GM12878 (cell line): ENCODE measurements at regions of chr13 and their contacts with region 1.

Region 1: DNA sequence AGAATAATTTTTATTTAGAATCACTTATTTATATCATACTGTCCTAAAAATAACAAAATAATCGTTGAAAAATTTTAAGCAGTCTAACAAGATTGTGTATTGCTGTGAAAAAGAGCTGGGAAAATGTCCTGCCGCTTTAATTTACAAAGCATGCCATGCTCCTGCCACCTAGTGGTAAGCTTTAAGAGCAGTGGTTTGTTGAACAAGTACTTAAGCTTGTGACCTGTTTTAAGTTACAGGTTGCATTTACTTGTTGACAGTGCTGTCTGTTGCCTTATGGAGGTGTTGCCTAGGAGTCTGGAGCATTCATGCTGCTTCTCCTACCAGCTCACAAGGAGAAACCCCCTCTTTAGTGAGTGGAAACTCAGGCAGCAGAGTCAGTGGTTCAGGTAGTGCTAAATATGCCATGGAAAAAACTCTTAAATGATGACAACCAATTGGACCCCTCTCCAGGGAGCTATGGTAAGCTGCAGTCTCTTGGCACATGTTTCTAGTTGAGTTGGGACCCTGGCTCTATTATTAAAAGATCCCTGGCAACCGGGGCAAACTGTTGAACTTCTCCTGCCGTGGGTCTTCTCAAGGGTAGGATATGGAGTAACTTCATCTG is 68.4 kb downstream of the SPATA13 start:
- DNase-seq: no peak
- ATAC-seq: peak; percentile 70
- H3K4me3 ChIP-seq: no peak overlapping the region
- H3K27ac ChIP-seq: no peak overlapping the region
- H3K4me1 ChIP-seq: peaks cover 18% of the 10 kb centered on the region
- H3K27me3 ChIP-seq: no peaks in the 10 kb centered on the region
- CTCF ChIP-seq: peak; percentile 76 to 96 (median 87)
- EP300 ChIP-seq: no peak
- POLR2A ChIP-seq: no peak
- RAD21 ChIP-seq: peak; percentile 82

Region 2: GRCh38 chr13:23915308-23915707 is 313.6 kb before region 1 on chr13:
- CTCF ChIA-PET with region 1: interaction called, 5 read pairs
- POLR2A ChIA-PET with region 1: no interaction called
- RAD21 ChIA-PET with region 1: no interaction called
- SMC1A ChIA-PET with region 1: interaction called, 8 read pairs
- in situ Hi-C with region 1: loop called (anchors 5 kb)
- intact Hi-C with region 1: no loop called
- DNase-seq: no peak
- ATAC-seq: no peak
- H3K4me3 ChIP-seq: no peak overlapping the region
- H3K27ac ChIP-seq: no peak overlapping the region
- H3K4me1 ChIP-seq: no peaks in the 10 kb centered on the region
- H3K27me3 ChIP-seq: no peaks in the 10 kb centered on the region
- CTCF ChIP-seq: no peak
- EP300 ChIP-seq: no peak
- POLR2A ChIP-seq: no peak
- RAD21 ChIP-seq: no peak

Region 3: DNA sequence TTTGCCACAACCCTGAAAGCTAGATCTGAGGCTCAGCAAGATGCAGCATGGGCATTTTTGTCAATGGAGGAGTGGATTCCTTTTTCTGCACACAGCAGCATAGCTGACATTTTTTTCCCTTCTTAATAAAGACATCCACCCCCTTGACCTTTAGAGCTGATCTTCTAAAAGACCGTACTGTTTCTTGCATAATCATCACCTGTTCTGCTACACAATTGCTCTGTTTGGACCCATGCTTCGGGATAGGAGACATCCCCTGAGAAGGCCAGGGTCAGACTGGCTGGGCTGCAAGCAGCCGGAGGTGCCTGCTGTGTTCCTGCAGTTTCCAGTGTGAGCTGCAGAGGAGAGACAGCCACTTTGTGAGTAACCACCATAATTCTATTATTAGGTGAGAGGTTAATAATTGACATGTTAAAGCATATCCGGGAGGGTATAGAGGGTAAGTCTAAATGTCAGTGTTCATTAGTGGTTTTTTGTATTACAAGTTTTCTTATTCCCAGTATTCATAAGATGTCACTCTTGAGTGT is 223.1 kb before region 1 on chr13:
- CTCF ChIA-PET with region 1: interaction called, 10 read pairs
- POLR2A ChIA-PET with region 1: no interaction called
- RAD21 ChIA-PET with region 1: no interaction called
- SMC1A ChIA-PET with region 1: no interaction called
- in situ Hi-C with region 1: no loop called
- intact Hi-C with region 1: no loop called
- DNase-seq: peak; percentile 19
- ATAC-seq: peak; percentile 95
- H3K4me3 ChIP-seq: no peak overlapping the region
- H3K27ac ChIP-seq: no peak overlapping the region
- H3K4me1 ChIP-seq: no peaks in the 10 kb centered on the region
- H3K27me3 ChIP-seq: no peaks in the 10 kb centered on the region
- CTCF ChIP-seq: no peak
- EP300 ChIP-seq: peak; percentile 14 to 57; a peak in 1 of 4 replicates
- POLR2A ChIP-seq: no peak
- RAD21 ChIP-seq: no peak

Region 4: DNA sequence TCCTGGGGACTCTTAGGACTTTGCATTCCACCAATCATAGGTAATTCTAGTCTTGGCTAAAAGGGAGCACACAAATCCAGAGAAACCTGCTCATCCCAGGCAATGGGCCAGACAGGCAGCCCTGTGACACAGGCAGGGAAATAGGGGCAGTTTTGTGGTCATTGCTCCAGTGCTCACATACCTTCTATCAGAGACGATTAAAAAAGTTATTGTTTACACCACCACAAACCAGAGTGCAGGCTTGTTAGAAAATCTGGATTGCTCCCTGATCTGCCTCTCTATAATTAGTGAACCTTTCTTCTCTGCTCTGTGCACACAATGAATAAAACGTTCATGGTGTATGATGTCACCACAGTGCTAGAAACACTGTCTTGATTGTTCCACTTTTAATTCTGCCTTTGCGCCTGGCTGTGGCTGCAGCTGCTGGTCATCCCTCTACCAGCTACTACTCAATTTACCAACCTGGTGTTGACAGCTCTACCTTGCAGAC is 190.1 kb before region 1 on chr13:
- CTCF ChIA-PET with region 1: interaction called, 15 read pairs
- POLR2A ChIA-PET with region 1: no interaction called
- RAD21 ChIA-PET with region 1: interaction called, 3 read pairs
- SMC1A ChIA-PET with region 1: interaction called, 5 read pairs
- in situ Hi-C with region 1: no loop called
- intact Hi-C with region 1: no loop called
- DNase-seq: no peak
- ATAC-seq: peak; percentile 74
- H3K4me3 ChIP-seq: no peak overlapping the region
- H3K27ac ChIP-seq: no peak overlapping the region
- H3K4me1 ChIP-seq: peaks cover 22% of the 10 kb centered on the region
- H3K27me3 ChIP-seq: peaks cover 0 to 3% of the 10 kb centered on the region in 2 experiments; a peak in 2 of 4 replicates
- CTCF ChIP-seq: no peak
- EP300 ChIP-seq: peak in 1 of 2 experiments; percentile 27; a peak in 1 of 4 replicates
- POLR2A ChIP-seq: no peak
- RAD21 ChIP-seq: no peak

Region 5: DNA sequence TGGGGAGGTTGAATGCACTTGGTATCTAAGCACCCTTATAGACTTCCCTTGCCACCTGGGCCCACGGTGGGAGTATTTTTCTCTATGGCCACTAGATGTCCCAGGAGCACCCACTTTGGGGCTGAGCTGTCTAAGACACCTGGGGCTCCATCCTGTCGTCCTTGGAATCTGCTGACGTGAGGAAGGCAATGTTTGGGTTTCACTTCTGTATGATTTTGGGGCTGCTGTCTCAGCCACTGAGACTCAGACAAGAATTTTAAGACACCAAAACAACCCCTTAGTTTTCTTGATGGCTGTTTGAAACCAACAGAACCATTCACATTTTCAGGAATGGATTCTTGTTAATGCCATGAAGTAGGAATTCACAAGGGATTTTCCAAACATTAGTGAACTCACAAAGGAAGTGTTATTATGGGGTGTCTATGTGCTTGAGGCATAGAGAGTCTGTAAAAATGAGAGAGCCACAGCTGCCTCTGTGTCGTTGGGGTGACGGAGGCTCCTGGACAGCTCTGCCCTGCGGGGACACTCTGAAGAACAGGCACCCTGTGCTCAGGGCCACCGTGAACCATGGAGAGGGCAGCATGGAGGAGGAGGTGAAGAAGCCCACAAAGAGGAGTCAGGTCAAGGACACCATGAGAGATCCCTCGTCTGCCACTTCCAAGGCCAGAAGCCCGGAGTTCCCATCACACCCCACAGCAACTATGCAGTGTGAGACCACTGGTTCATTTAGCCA is 175.3 kb before region 1 on chr13:
- CTCF ChIA-PET with region 1: interaction called, 33 read pairs
- POLR2A ChIA-PET with region 1: interaction called, 3 read pairs
- RAD21 ChIA-PET with region 1: interaction called, 4 read pairs
- SMC1A ChIA-PET with region 1: interaction called, 5 read pairs
- in situ Hi-C with region 1: no loop called
- intact Hi-C with region 1: no loop called
- DNase-seq: peak; percentile 17
- ATAC-seq: peak; percentile 98
- H3K4me3 ChIP-seq: no peak overlapping the region
- H3K27ac ChIP-seq: no peak overlapping the region
- H3K4me1 ChIP-seq: no peaks in the 10 kb centered on the region
- H3K27me3 ChIP-seq: no peaks in the 10 kb centered on the region; a peak in 2 of 4 replicates
- CTCF ChIP-seq: peak; percentile 81 to 86 (median 82)
- EP300 ChIP-seq: no peak
- POLR2A ChIP-seq: no peak
- RAD21 ChIP-seq: peak; percentile 92

Region 6: GRCh38 chr13:24270639-24271141 is 41.7 kb after region 1 on chr13:
- CTCF ChIA-PET with region 1: interaction called, 15 read pairs
- POLR2A ChIA-PET with region 1: interaction called, 15 read pairs
- RAD21 ChIA-PET with region 1: interaction called, 80 read pairs
- SMC1A ChIA-PET with region 1: interaction called, 25 read pairs
- in situ Hi-C with region 1: no loop called
- intact Hi-C with region 1: no loop called
- DNase-seq: peak; percentile 38
- ATAC-seq: peak; percentile 71
- H3K4me3 ChIP-seq: peak overlapping the region; percentile 60
- H3K27ac ChIP-seq: peak overlapping the region; percentile 93
- H3K4me1 ChIP-seq: peaks cover 46% of the 10 kb centered on the region
- H3K27me3 ChIP-seq: no peaks in the 10 kb centered on the region
- CTCF ChIP-seq: no peak
- EP300 ChIP-seq: no peak
- POLR2A ChIP-seq: peak; percentile 77
- RAD21 ChIP-seq: peak; percentile 16; the same call in 1 of the 2 replicates

Region 7: DNA sequence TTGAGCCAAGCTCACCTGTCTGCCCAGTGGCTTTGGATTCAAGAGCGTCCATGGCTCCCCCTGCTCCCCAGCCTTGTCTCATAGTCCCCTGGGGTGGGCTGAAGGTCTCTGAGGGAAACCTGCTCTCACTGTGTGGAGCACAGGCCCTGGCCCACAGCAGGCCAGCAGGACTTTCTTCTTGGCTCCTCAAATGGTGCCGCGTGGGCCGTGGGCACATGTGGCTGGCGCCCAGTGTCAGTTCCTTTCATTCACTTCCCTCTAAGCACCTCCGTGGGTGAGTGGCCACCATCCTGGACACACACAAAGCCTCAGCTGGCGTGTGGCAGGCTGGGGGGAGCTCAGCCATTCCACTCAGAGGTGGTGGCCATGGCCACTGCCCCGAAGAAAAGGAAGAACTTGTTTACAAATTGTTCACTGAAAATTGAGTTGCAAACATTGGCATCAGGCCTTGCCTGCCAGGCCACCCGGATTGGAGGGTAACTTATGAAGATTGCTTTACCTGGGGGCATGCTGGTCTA is 133.5 kb after region 1 on chr13:
- CTCF ChIA-PET with region 1: no interaction called
- POLR2A ChIA-PET with region 1: no interaction called
- RAD21 ChIA-PET with region 1: no interaction called
- SMC1A ChIA-PET with region 1: no interaction called
- in situ Hi-C with region 1: no loop called
- intact Hi-C with region 1: no loop called
- DNase-seq: no peak
- ATAC-seq: no peak
- H3K4me3 ChIP-seq: no peak overlapping the region
- H3K27ac ChIP-seq: no peak overlapping the region
- H3K4me1 ChIP-seq: no peaks in the 10 kb centered on the region
- H3K27me3 ChIP-seq: no peaks in the 10 kb centered on the region
- CTCF ChIP-seq: no peak
- EP300 ChIP-seq: no peak
- POLR2A ChIP-seq: no peak
- RAD21 ChIP-seq: no peak

Region 8: DNA sequence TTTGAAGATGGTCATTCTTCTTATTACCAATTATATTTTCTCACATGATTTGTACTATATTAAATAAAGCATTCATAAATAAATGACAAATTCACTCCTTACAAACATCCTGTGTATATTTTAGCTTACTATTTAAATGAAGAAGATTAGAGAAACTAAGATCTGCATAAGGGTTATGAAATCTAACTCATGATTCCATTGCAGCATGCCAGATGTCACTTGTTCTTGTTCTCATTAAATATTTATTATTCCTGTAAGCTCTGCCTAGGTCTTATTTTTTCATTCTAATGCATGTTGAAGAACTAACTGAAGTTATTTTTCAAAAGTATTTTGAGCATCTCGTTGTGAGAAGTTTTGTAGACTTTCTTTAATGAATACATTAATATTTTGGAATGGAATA is 1090.8 kb after region 1 on chr13:
- CTCF ChIA-PET with region 1: no interaction called
- POLR2A ChIA-PET with region 1: no interaction called
- RAD21 ChIA-PET with region 1: no interaction called
- SMC1A ChIA-PET with region 1: no interaction called
- in situ Hi-C with region 1: no loop called
- intact Hi-C with region 1: no loop called
- DNase-seq: no peak
- ATAC-seq: no peak
- H3K4me3 ChIP-seq: no peak overlapping the region
- H3K27ac ChIP-seq: no peak overlapping the region
- H3K4me1 ChIP-seq: no peaks in the 10 kb centered on the region
- H3K27me3 ChIP-seq: no peaks in the 10 kb centered on the region
- CTCF ChIP-seq: no peak
- EP300 ChIP-seq: no peak
- POLR2A ChIP-seq: no peak
- RAD21 ChIP-seq: no peak